Calu3 (cell line): ENCODE measurements at regions of chr22 and their contacts with region 1.

Region 1: GRCh38 chr22:28600546-28601143 is 79.0 kb downstream of the TTC28 start:
- DNase-seq: peak; percentile 21
- H3K4me3 Mint-ChIP-seq: no peak overlapping the region
- H3K27ac Mint-ChIP-seq: no peak overlapping the region
- H3K4me1 Mint-ChIP-seq: peaks cover 8% of the 10 kb centered on the region
- H3K27me3 Mint-ChIP-seq: no peaks in the 10 kb centered on the region
- CTCF ChIP-seq: peak; percentile 42

Region 2: GRCh38 chr22:28488825-28489224 is 111.8 kb before region 1 on chr22:
- CTCF ChIA-PET with region 1: no interaction called
- intact Hi-C with region 1: no loop called
- DNase-seq: no peak
- H3K4me3 Mint-ChIP-seq: no peak overlapping the region
- H3K27ac Mint-ChIP-seq: no peak overlapping the region
- H3K4me1 Mint-ChIP-seq: no peaks in the 10 kb centered on the region
- H3K27me3 Mint-ChIP-seq: peaks cover 13% of the 10 kb centered on the region
- CTCF ChIP-seq: no peak

Region 3: GRCh38 chr22:28541137-28541536 is 59.5 kb before region 1 on chr22:
- CTCF ChIA-PET with region 1: no interaction called
- intact Hi-C with region 1: no loop called
- DNase-seq: no peak
- H3K4me3 Mint-ChIP-seq: no peak overlapping the region
- H3K27ac Mint-ChIP-seq: no peak overlapping the region
- H3K4me1 Mint-ChIP-seq: no peaks in the 10 kb centered on the region
- H3K27me3 Mint-ChIP-seq: peaks cover 7% of the 10 kb centered on the region
- CTCF ChIP-seq: no peak

Region 4: GRCh38 chr22:28829358-28830181 is 228.9 kb after region 1 on chr22:
- CTCF ChIA-PET with region 1: interaction called, 6 read pairs
- intact Hi-C with region 1: loop called (anchors 1 kb)
- DNase-seq: peak; percentile 74
- H3K4me3 Mint-ChIP-seq: no peak overlapping the region
- H3K27ac Mint-ChIP-seq: no peak overlapping the region
- H3K4me1 Mint-ChIP-seq: peaks cover 9% of the 10 kb centered on the region
- H3K27me3 Mint-ChIP-seq: no peaks in the 10 kb centered on the region
- CTCF ChIP-seq: peak; percentile 95

Region 5: DNA sequence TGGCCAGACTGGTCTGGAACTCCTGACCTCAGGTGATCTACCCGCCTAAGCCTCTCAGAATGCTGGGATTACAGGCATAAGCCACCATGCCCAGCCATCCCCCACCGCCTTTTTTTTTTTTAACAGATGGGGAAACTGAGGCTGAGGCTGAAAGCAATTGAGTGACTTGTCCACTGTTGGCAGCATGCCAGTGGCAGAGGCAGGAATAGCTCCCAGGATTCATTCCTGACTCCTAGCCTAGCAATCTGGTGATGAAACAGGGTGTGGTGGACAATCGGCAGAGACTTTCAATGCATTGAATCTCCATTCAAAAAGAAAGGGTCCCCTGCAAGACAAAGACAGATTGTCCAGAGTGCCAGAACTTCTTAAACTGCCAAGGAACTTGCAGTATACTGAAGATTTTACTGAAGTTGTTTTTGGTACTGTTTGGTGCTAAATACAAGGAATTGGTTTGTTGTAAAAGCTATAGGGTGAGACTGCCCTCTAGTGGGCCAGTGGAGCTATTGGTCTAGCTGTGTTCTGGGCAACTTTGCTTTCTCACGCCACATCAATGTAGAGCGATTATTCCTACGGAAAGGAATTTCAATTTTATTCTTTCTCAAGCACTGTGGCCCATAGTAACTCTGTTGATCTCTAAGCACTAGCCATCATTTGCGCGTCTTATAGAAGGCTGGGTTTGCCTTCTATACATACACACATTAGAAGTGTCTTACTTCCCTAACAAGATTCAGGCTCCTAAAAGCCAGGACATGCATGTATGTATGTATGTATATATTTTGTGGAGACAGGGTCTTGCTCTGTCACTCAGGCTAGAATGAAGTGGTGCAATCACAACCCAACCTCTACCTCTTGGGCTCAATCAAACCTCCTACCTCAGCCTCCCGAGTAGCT is 440.0 kb after region 1 on chr22:
- CTCF ChIA-PET with region 1: no interaction called
- intact Hi-C with region 1: loop called (anchors 2 kb)
- DNase-seq: peak; percentile 72
- H3K4me3 Mint-ChIP-seq: no peak overlapping the region
- H3K27ac Mint-ChIP-seq: no peak overlapping the region
- H3K4me1 Mint-ChIP-seq: peaks cover 43% of the 10 kb centered on the region
- H3K27me3 Mint-ChIP-seq: no peaks in the 10 kb centered on the region
- CTCF ChIP-seq: peak; percentile 82

Region 6: GRCh38 chr22:29245637-29246385 is 645.2 kb after region 1 on chr22:
- CTCF ChIA-PET with region 1: interaction called, 6 read pairs
- intact Hi-C with region 1: loop called (anchors 5 kb)
- DNase-seq: peak; percentile 77
- H3K4me3 Mint-ChIP-seq: no peak overlapping the region
- H3K27ac Mint-ChIP-seq: no peak overlapping the region
- H3K4me1 Mint-ChIP-seq: peaks cover 9% of the 10 kb centered on the region
- H3K27me3 Mint-ChIP-seq: peaks cover 42% of the 10 kb centered on the region
- CTCF ChIP-seq: peak; percentile 90